Heart right ventricle (tissue), 16 donors: ENCODE measurements at regions of chr12 and their contacts with region 1.

Region 1: GRCh38 chr12:17866802-17867201 is 223.2 kb downstream of the RERGL start:
- DNase-seq: no peak
- ATAC-seq: no peak
- H3K4me3 ChIP-seq: no peak overlapping the region
- H3K27ac ChIP-seq: no peak overlapping the region
- H3K4me1 ChIP-seq: no peaks in the 10 kb centered on the region
- H3K27me3 ChIP-seq: no peaks in the 10 kb centered on the region
- CTCF ChIP-seq: no peak

Region 2: GRCh38 chr12:17778242-17778641 is 88.6 kb before region 1 on chr12:
- intact Hi-C with region 1: loop called (anchors 2 to 5 kb)
- DNase-seq: no peak
- ATAC-seq: no peak
- H3K4me3 ChIP-seq: no peak overlapping the region
- H3K27ac ChIP-seq: no peak overlapping the region
- H3K4me1 ChIP-seq: no peaks in the 10 kb centered on the region
- H3K27me3 ChIP-seq: no peaks in the 10 kb centered on the region
- CTCF ChIP-seq: no peak